Ascending aorta (tissue), 2 donors: ENCODE measurements at regions of chr3 and their contacts with region 1.

Region 1: DNA sequence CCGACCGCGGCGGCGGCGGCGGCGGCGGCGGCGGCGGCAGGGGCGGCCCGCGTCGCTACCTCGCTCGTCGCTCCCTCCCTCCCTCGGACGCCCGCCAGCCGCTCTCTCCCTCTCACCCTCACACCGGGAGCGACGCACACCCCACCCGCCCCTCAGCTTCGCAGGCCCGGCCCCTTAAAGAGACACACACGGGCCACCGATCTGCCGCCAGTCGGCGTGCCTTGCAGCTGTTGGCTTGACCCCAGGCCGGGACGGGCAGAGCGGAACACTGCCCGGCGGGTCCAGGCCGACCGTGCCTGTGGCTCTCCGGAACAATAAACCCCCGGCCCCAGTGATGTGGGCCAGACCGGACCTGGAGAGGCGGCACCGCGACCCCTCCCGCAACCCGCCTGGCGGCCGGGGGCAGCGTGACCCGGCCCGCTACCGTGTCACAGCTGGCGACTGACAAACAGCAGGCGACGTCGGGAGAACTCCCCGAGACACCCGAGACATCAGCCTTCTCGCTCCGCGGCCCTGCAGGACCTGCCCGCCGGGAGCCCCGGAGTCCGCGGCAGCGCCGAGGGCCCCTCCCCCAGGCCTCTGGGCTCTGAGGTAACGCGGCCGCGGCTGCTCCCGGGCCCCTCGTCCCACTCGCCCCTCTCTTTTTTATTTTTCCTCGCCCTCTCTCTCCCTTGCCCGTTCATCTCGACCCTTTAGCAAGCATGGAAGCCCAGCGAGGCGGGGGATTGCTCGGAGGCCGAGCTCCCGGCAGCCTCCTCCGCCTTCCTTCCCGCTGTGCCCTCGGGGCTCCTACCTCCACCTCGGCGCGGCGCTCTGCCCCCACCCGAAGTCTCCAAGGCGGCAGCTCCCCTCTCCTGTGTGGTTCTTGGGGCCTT is at the start of gene SETD2:
- DNase-seq: peak; percentile 80 to 97
- H3K4me3 ChIP-seq: peak within 1 kb of the TSS; percentile 97 to 98
- H3K27ac ChIP-seq: peak within 1 kb of the TSS; percentile 94 to 97
- H3K4me1 ChIP-seq: peaks cover 3 to 44% of the 10 kb centered on the region in 2 donors
- H3K27me3 ChIP-seq: no peaks in the 10 kb centered on the region
- CTCF ChIP-seq: peak; percentile 24 to 59 (median 34)
- total RNA-seq, gene SETD2: 21.0 TPM

Region 2: DNA sequence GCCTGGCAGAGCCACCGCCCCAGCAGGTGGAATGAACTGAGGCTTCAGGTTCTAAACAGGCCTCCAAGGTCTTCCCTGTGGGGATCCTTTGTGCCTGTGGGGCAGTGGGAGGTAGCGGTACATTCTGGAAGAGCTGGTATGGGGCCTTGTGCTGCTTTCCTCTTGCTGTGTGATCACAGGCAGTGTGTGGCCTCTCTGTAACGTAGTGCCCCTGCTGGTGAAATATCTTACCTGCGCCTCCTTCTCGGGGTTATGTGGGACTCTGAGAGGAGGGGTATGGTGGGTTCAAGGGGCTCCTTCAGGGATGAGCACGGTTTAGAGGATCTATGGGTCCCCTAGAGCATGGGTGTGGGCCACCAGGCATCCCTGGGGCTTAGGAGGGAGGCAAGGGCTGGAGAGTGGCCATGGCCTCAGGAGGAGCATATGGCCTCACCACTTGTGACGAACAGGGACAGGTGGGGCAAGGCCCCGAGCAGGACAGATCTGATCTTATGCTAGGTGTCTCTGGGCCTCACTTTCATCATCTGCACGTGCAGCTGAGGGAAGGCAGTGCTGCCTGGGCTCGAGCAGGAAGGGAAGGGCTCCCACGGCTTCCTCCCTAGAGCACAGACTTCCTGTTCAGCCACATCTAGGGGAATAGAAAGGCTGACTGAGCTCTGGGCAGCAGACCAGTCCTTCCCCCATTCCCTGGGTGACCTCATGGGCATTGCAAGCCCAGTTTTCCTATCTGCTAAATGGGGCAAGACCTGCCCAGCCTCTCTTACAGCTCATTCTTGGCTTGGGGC is 468.9 kb before region 1 on chr3:
- intact Hi-C with region 1: no loop called
- DNase-seq: peak; percentile 64 to 80
- H3K4me3 ChIP-seq: no peak overlapping the region
- H3K27ac ChIP-seq: peak overlapping the region; percentile 83 to 93
- H3K4me1 ChIP-seq: peaks cover 25 to 56% of the 10 kb centered on the region in 2 donors
- H3K27me3 ChIP-seq: no peaks in the 10 kb centered on the region
- CTCF ChIP-seq: peak in 1 of 3 experiments; percentile 16

Region 3: DNA sequence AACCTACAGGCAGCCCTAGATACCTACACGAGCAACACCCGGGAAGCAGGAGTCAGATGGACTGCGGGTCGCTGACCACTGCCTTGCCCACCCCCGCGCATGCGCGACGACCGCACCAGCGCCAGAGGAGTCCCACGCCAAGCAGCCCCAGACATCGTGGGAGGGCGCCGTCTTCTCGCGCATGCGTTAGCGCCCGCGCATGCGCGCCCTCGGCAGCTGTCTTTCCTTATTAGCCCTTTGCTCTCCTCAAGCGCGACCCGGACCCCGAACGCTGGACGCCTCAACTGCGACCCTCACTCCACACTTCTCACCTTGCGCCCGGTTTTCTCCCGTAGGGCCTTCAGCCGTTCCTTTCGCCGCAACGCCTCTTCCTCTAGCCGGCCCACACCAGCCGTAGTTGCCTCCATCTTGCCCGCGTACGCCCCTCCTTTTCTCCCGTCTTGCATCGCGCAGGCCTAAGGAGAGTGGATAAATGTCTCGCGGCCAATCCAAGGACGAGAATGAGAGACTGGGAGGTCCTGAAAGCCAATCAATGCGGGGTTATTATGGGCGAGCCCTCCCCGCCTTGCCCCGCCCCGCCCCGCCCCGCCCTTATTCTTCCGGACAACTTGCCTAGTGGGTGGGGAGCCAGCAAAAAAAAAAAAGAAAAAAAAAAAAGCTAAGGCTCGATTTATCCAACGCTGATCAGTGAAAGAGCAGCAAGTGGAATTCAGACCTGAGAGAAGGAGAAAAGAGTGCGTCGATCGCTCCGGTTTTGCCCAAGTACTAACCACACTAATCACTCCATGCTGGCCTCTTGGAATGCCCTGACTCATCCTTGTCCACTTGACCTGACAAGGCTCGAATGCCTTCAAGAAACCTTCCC is 187.7 kb before region 1 on chr3 and contains the start of gene CCDC12:
- intact Hi-C with region 1: loop called (anchors 2 kb)
- DNase-seq: peak; percentile 94 to 98
- H3K4me3 ChIP-seq: peak within 1 kb of the TSS; percentile 60 to 83
- H3K27ac ChIP-seq: peak within 1 kb of the TSS; percentile 84 to 90
- H3K4me1 ChIP-seq: peaks cover 23 to 29% of the 10 kb centered on the region in 2 donors
- H3K27me3 ChIP-seq: no peaks in the 10 kb centered on the region
- CTCF ChIP-seq: no peak
- total RNA-seq, gene CCDC12: 34.3 TPM

Region 4: DNA sequence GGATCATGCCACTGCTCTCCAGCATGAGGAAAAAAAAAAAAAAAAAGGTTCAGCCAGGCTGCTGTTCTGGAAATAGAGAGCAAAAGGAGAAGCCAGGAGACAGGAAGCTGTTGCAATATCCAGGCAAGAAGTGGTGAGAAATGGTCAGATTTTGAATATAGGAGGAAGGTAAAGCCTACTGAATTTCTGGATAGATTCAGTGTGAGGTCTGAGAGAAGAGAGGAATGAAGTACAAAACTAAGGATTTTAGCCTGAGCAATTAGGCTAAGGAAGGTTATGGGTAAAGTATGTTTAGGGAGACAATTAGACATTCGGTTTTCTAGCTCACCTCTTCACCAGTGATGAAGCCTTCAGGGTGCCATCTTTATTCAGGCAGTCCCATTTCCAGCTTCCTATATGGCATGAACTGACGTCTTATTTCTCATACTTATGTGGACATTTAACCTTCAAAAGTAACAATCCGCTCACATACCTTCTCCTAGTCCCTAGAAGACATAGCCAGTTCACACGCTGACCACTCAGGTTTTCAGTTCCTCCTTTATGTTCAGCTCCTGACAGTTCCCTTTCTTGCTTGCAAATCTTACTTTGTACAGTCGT is 61.2 kb after region 1 on chr3:
- intact Hi-C with region 1: no loop called
- DNase-seq: no peak
- H3K4me3 ChIP-seq: no peak overlapping the region
- H3K27ac ChIP-seq: no peak overlapping the region
- H3K4me1 ChIP-seq: no peaks in the 10 kb centered on the region
- H3K27me3 ChIP-seq: no peaks in the 10 kb centered on the region
- CTCF ChIP-seq: no peak

Region 5: GRCh38 chr3:47282424-47283192 is 118.4 kb after region 1 on chr3 and contains the starts of genes KIF9 and KLHL18:
- intact Hi-C with region 1: loop called (anchors 2 kb)
- DNase-seq: peak; percentile 82 to 97
- H3K4me3 ChIP-seq: peak within 1 kb of the TSS; percentile 74
- H3K27ac ChIP-seq: peak within 1 kb of the TSS; percentile 89 to 94
- H3K4me1 ChIP-seq: peaks cover 7 to 27% of the 10 kb centered on the region in 2 donors
- H3K27me3 ChIP-seq: no peaks in the 10 kb centered on the region
- CTCF ChIP-seq: no peak
- total RNA-seq, gene KIF9: not detected
- total RNA-seq, gene KLHL18: 1.8 TPM

Region 6: DNA sequence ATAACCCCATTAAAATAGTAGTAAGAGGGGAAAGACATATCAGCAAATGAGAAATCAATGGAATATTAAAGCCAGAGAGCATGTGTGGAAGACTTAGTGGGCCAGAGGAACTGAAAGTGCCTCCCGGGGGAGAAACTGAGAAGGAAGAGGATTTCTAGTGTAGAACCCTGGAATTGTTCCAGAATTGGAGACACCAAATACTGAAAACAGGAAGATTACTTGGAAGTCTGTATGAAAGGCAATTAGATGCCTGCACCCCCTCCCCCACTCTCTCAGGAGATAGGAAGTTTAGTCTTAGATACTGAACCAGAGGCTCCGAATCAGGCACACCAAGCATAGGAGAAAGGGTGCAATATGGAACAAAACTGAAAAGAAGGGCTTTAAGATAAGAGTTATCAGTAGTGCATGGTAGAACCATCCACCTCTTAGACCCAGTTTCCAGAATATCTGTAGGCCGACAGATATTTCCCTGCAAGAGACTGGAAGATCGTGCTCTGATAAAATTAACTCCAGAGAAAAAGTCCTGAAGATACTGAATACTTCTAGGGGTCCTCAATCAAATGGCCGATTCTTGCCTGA is 150.9 kb after region 1 on chr3:
- intact Hi-C with region 1: loop called (anchors 10 kb)
- DNase-seq: no peak
- H3K4me3 ChIP-seq: no peak overlapping the region
- H3K27ac ChIP-seq: no peak overlapping the region
- H3K4me1 ChIP-seq: no peaks in the 10 kb centered on the region
- H3K27me3 ChIP-seq: no peaks in the 10 kb centered on the region
- CTCF ChIP-seq: no peak

Region 7: DNA sequence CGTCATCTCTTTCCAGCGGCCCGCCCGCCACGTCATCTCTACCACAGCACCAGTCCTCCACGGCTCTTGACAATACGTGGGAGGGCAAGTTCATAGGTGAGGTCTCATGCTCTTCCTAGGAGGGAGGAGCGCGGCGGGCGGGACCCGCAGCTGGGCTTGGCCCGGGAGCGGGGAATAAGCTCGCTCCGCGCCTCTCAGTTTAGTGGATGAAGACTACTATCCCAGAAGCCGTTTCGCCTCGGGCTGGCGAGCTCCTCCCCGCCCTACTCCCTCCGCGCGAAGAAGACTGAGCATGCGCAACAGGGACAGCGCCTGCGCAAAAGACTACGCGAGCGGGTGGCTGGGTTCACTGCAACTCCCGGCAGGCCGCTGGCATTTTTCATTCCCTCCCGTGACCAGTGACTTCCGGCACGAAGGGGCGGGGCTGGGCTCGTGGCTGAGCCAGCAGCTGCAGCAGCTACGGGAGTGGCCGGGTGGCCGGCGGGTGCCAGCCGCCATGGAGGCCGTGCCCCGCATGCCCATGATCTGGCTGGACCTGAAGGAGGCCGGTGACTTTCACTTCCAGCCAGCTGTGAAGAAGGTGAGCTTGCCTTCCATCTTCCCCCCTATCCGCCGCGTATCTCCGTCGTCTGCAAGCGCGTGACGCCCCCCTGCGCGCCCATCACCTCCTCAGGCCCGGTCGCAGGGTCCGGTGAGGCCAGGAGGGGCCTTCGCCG is 216.5 kb after region 1 on chr3 and contains the start of gene PTPN23:
- intact Hi-C with region 1: loop called (anchors 2 kb)
- DNase-seq: peak; percentile 96 to 99
- H3K4me3 ChIP-seq: peak within 1 kb of the TSS; percentile 79 to 93
- H3K27ac ChIP-seq: peak within 1 kb of the TSS; percentile 95 to 97
- H3K4me1 ChIP-seq: peaks cover 3 to 26% of the 10 kb centered on the region in 2 donors
- H3K27me3 ChIP-seq: no peaks in the 10 kb centered on the region
- CTCF ChIP-seq: no peak
- total RNA-seq, gene PTPN23: 35.2 TPM

Region 8: GRCh38 chr3:47781685-47782445 is 617.6 kb after region 1 on chr3 and contains the start of gene SMARCC1:
- intact Hi-C with region 1: loop called (anchors 10 kb)
- DNase-seq: peak; percentile 89 to 99
- H3K4me3 ChIP-seq: peak within 1 kb of the TSS; percentile 75 to 97
- H3K27ac ChIP-seq: peak within 1 kb of the TSS; percentile 93 to 97
- H3K4me1 ChIP-seq: peaks cover 0 to 18% of the 10 kb centered on the region in 2 donors
- H3K27me3 ChIP-seq: no peaks in the 10 kb centered on the region
- CTCF ChIP-seq: no peak
- total RNA-seq, gene SMARCC1: 24.8 TPM